Colonic mucosa (tissue), 4 donors: ENCODE measurements at regions of chr10 and their contacts with region 1.

Region 1: GRCh38 chr10:110803830-110804338 is 67.8 kb upstream of the PDCD4 start:
- DNase-seq: peak; percentile 79
- H3K4me3 ChIP-seq: no peak overlapping the region
- H3K27ac ChIP-seq: peak overlapping the region; percentile 4
- H3K4me1 ChIP-seq: peaks cover 5% of the 10 kb centered on the region
- H3K27me3 ChIP-seq: no peaks in the 10 kb centered on the region
- CTCF ChIP-seq: peak; percentile 65

Region 2: DNA sequence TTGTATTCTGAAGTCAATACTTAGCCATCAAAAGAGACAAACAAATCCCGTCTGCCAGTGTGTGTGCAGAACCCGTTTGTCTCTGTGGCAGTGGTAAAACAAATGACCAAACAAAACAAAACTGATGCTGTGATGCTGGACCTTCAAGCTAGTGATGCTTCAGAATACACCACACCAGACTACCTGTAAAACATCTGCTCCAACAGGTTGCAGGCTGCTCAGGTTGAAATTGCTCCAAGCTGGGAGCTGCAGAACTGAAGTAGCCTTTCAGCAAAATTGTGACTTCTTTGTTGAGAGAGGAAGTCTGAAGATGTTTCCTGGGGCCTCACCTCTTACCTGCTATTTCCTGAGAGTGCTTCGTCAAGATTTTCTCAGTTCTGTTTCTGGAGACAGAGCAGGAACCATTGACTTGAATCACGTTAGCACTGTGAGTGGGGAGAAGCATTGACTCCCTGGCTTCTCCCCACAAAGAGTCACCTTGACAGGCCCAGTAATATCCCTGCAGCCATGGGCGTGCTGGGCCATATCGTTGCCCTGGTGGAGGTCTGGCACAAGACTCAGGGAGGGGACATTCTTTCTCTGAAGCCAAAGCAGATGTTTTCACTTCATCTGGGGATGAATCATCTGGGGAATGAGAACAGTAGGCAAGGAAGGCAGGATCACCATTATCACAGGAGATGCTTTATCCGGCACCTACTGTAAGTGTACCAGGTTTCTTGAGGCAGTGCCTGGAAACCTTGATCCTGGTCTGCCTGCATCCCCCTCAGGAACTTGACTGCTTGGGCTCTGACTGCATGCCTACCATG is 79.6 kb before region 1 on chr10:
- intact Hi-C with region 1: no loop called
- DNase-seq: no peak
- H3K4me3 ChIP-seq: no peak overlapping the region
- H3K27ac ChIP-seq: no peak overlapping the region
- H3K4me1 ChIP-seq: no peaks in the 10 kb centered on the region
- H3K27me3 ChIP-seq: no peaks in the 10 kb centered on the region
- CTCF ChIP-seq: no peak

Region 3: DNA sequence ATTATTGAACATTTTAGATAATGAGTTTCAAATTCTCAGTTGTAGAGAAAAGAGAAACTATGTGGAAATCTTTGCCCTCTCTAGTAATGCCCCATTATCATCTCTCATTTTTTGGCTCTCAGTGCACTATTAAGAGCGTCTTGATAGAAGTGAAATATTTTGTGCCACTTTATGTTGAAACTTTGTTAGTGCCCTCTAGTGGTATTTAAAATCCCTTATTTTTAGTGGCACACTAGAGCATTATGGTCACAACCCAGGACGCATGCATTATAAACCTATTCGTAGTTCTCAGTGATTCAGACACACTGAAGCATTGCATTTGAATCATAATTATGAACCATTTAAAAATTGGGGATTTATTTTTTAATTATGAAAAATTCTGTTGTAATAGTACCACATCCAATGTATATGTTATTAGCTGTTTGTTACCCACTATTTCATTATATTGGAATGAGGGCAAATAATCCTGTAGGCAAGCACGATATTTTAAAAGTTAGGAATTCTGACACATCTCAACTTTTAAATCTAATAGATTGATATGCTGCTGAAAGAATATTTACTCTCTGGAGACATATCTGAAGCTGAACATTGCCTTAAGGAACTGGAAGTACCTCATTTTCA is 89.8 kb after region 1 on chr10:
- intact Hi-C with region 1: loop called (anchors 5 kb)
- DNase-seq: no peak
- H3K4me3 ChIP-seq: no peak overlapping the region
- H3K27ac ChIP-seq: no peak overlapping the region
- H3K4me1 ChIP-seq: peaks cover 4% of the 10 kb centered on the region
- H3K27me3 ChIP-seq: no peaks in the 10 kb centered on the region
- CTCF ChIP-seq: no peak